Activated T-helper 1 cell treated with anti-CD3 and anti-CD28 coated beads, Interleukin-12 subunit alpha, Interleukin-12 subunit beta, Interleukin-2, Interleukin-4 antibody, amounts not matched to agents 30 ng/mL and 10 ng/mL and 1 ng/mL, durations not matched to agents 14 hours and 24 hours and 36 hours (primary cell): ENCODE measurements at regions of chr11 and their contacts with region 1.

Region 1: GRCh38 chr11:128494418-128495332 is 92.7 kb downstream of the ETS1 start:
- DNase-seq: no peak
- H3K4me3 Mint-ChIP-seq: peak overlapping the region; percentile 74
- H3K27ac Mint-ChIP-seq: peak overlapping the region; percentile 98
- H3K4me1 Mint-ChIP-seq: peaks cover 98% of the 10 kb centered on the region
- H3K27me3 Mint-ChIP-seq: no peaks in the 10 kb centered on the region

Region 2: DNA sequence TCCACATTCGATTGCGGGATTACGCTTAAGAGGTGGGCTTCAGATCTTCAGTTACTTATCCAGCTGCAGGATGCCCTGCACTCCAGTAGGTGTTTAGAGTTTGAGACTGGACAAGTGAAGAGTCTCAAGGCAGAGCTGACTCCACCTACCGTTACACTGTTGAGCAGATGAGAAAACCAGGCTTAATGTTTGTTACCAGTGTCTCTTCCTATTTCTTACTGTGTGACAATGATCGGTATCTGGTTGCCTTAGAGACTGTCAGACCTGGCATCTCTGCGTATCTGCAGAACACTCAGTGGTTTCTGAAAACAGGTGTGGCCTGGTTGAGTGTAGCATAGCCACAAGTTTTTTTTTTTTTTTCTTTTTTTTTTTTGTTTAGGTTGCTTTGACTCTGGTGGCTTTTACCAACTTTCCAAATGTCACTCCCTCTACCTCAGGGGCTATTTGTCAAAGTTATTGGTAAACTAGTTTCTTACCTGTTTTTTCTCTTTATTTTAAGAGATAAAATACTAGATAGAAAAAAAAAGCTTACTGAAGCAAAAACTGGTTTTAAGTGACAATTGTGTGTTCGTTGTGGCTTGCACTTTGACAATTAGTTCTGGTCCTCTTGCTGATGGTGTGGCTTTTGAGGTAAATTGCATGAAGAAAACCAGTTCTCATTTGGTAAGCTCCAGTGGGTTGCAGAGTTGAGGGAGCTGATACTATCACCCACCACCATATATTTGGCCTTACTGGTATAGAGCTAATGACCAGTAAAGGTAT is 192.1 kb before region 1 on chr11:
- intact Hi-C with region 1: loop called (anchors 1 kb)
- DNase-seq: peak; percentile 79
- H3K4me3 Mint-ChIP-seq: peak overlapping the region; percentile 91
- H3K27ac Mint-ChIP-seq: peak overlapping the region; percentile 97
- H3K4me1 Mint-ChIP-seq: peaks cover 85% of the 10 kb centered on the region
- H3K27me3 Mint-ChIP-seq: no peaks in the 10 kb centered on the region

Region 3: GRCh38 chr11:128453444-128454336 is 41.0 kb before region 1 on chr11:
- intact Hi-C with region 1: no loop called
- DNase-seq: no peak
- H3K4me3 Mint-ChIP-seq: no peak overlapping the region
- H3K27ac Mint-ChIP-seq: peak overlapping the region; percentile 74
- H3K4me1 Mint-ChIP-seq: peaks cover 70% of the 10 kb centered on the region
- H3K27me3 Mint-ChIP-seq: no peaks in the 10 kb centered on the region

Region 4: DNA sequence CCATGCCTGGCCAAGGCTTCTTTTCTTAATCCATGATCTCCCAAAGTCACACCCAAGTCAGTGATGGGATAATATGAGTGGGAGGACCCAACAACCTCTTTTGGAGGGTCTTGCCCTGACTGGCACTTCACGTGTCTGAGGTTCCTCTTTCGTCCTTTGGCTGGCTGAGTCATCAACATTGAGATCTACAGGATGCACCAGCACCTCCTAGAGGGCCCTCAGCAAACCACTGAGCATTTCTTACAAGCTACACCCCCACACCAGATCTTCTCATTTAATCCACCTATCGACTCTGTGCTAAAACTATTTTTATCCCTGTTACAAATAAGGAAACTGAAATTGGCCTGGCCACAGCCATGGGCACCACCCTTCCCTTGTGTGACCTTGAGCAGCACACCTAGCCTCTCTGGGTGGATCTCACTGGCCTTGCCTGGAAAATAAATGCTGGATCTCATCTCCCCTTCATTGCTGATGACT is 262.6 kb after region 1 on chr11:
- intact Hi-C with region 1: loop called (anchors 2 kb)
- DNase-seq: peak; percentile 55
- H3K4me3 Mint-ChIP-seq: peak overlapping the region; percentile 63
- H3K27ac Mint-ChIP-seq: peak overlapping the region; percentile 95
- H3K4me1 Mint-ChIP-seq: peaks cover 68% of the 10 kb centered on the region
- H3K27me3 Mint-ChIP-seq: no peaks in the 10 kb centered on the region